Mucosa of descending colon (tissue), 3 donors: ENCODE measurements at regions of chr15 and their contacts with region 1.

Region 1: GRCh38 chr15:57146506-57147201 is 228.2 kb downstream of the TCF12 start:
- DNase-seq: peak in 1 of 3 donors; percentile 77
- ATAC-seq: peak; percentile 64
- H3K4me3 ChIP-seq: no peak overlapping the region
- H3K4me1 ChIP-seq: peaks cover 9% of the 10 kb centered on the region
- CTCF ChIP-seq: peak; percentile 28

Region 2: GRCh38 chr15:56786966-56787365 is 359.7 kb before region 1 on chr15:
- intact Hi-C with region 1: no loop called
- DNase-seq: no peak
- ATAC-seq: no peak
- H3K4me3 ChIP-seq: no peak overlapping the region
- H3K4me1 ChIP-seq: no peaks in the 10 kb centered on the region
- CTCF ChIP-seq: no peak

Region 3: DNA sequence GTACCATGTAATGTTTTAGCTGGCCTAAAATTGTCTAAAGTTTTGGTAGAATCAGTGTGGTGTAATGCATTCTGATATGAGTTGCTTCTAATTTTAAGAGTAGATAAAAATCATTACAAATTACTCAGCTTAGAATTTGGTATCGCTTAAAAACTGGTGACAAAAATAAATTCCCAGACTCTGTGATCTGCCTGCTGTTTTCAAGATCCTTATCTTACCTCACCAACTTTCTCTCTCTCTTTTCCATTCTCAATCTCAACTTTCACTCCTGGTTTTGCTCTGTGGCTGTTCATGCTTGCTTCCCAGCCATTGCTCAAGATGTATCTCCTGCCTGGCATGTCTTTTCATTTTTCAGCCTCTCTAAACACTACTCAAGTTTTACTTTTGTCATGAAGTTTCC is 182.5 kb before region 1 on chr15:
- intact Hi-C with region 1: no loop called
- DNase-seq: no peak
- ATAC-seq: no peak
- H3K4me3 ChIP-seq: no peak overlapping the region
- H3K4me1 ChIP-seq: peaks cover 8% of the 10 kb centered on the region
- CTCF ChIP-seq: no peak

Region 4: DNA sequence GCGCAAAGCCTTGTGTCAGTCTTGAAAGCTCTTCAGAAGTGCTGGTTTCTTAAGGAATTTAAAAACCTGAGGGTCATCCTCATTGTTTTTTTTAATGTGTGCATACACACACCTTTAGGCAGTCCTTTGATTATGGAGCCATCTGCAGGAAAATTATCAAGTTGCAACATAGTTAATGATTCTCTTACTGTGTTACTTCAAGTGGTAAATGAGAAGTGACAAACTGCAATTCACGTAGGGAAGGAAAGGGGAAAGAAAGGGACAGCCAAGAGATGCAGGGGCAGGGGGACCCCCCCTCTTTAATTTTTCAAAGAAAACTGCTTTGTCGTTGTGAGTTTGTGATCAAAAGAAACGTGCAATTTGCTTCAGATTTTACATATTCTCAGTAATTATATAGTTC is 67.2 kb after region 1 on chr15:
- intact Hi-C with region 1: loop called in 1 of 2 experiments (anchors 2 kb)
- DNase-seq: no peak
- ATAC-seq: peak; percentile 87
- H3K4me3 ChIP-seq: no peak overlapping the region
- H3K4me1 ChIP-seq: peaks cover 7% of the 10 kb centered on the region
- CTCF ChIP-seq: no peak

Region 5: GRCh38 chr15:57306161-57306943 is 159.7 kb after region 1 on chr15:
- intact Hi-C with region 1: loop called (anchors 5 to 10 kb)
- DNase-seq: peak; percentile 90 to 96 (median 96)
- ATAC-seq: peak; percentile 95
- H3K4me3 ChIP-seq: peak overlapping the region; percentile 6
- H3K4me1 ChIP-seq: peaks cover 28% of the 10 kb centered on the region
- CTCF ChIP-seq: peak; percentile 79